ENCODE measurements at regions of chr1 and their contacts with region 1.

Region 1: GRCh38 chr1:87328272-87329050 is at the start of gene LMO4:
- DNase-seq: peak; percentile 93
- H3K4me3 Mint-ChIP-seq: peak within 1 kb of the TSS; percentile 89
- H3K27ac Mint-ChIP-seq: peak within 1 kb of the TSS; percentile 85
- H3K4me1 Mint-ChIP-seq: peaks cover 33% of the 10 kb centered on the region
- H3K27me3 Mint-ChIP-seq: peaks cover 8% of the 10 kb centered on the region
- total RNA-seq, gene LMO4: 23.0 to 24.1 TPM

Region 2: DNA sequence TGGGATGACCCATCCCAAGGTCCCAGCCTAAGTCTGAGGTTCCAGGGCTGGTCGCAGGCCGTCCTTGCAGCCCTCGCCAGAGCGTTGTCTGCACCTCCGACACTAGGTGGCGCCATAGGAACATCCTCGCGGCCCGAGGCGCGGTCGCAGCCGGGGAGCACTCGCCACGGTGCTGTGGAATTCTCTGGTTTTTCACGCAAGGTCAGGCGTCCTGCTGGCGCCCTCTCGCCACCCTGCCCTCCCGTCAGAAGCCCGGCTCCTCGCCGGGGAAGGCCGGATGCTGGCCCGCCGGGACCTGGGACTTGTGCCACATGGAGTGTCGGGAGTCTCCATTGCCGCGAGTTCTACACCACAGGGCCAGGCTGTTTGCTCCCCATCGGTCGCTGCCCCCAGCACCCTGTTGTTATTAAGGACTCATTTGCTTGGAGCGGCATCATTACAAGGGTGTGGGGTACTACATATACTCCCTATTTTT is 196.6 kb before region 1 on chr1:
- CTCF ChIA-PET with region 1: interaction called, 3 read pairs
- POLR2A ChIA-PET with region 1: no interaction called
- intact Hi-C with region 1: loop called (anchors 5 kb)
- DNase-seq: peak; percentile 79
- H3K4me3 Mint-ChIP-seq: peak overlapping the region; percentile 70
- H3K27ac Mint-ChIP-seq: no peak overlapping the region
- H3K4me1 Mint-ChIP-seq: peaks cover 10% of the 10 kb centered on the region
- H3K27me3 Mint-ChIP-seq: peaks cover 32% of the 10 kb centered on the region

Region 3: DNA sequence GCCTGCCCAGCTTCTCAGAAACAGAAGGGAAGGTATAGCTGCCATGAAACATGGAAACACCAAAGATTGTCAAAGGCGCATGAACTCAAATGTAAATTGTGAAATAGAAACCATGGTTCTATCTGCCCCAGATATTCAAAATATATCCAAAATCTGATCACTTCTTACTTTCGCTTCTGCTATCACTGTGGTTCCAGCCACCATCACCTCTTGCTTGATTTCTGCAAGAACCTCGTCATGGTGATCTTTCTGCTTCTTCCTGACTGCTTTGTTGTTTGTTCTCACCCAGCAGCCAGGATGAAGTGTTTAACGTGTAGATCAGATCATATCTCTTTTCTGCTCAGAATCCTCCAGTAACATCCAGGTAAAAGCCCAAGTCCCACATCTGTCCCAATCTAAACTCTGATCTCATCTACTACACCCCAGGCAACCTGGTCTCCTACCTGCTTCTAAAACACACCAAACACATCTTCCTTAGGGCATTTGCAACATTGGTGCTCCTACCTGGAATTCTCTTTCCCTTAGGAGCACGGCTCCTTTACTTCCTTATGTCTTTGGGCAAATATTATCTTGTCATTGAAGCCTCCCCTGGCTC is 10.3 kb before region 1 on chr1:
- CTCF ChIA-PET with region 1: interaction called, 15 read pairs
- POLR2A ChIA-PET with region 1: no interaction called
- intact Hi-C with region 1: no loop called
- DNase-seq: no peak
- H3K4me3 Mint-ChIP-seq: no peak overlapping the region
- H3K27ac Mint-ChIP-seq: no peak overlapping the region
- H3K4me1 Mint-ChIP-seq: peaks cover 7% of the 10 kb centered on the region
- H3K27me3 Mint-ChIP-seq: peaks cover 12% of the 10 kb centered on the region

Region 4: DNA sequence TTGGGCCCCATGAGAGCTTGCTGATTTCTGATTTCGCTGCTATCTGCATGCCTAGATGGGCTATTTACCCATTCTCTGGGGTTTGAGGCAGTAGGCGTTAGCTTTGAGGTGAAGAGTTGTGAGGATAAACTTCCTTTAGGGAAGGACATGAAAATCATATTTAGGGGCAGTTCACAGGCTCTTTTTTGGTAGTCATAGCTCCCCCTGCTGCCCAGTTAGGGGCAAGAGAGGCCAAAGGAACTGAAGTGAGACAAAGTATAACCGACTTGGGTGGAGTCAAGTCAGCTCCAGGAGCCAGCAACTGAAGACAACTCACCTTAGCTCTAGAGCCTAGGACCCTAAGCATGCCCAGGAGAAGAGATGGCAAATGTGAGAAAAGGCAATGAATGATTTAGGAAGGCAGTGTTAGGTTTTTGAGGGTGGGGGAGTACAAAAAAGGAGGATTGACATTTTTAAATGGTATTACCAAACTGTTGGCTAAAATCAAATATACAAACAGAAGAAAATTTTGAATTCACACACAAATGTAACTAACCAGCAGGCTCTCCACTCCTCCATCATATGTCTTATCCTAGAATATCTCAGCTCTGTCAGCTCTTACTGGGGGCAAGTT is 625.4 kb after region 1 on chr1:
- CTCF ChIA-PET with region 1: interaction called, 42 read pairs
- POLR2A ChIA-PET with region 1: no interaction called
- intact Hi-C with region 1: loop called (anchors 1 kb)
- DNase-seq: peak; percentile 62
- H3K4me3 Mint-ChIP-seq: no peak overlapping the region
- H3K27ac Mint-ChIP-seq: no peak overlapping the region
- H3K4me1 Mint-ChIP-seq: no peaks in the 10 kb centered on the region
- H3K27me3 Mint-ChIP-seq: peaks cover 19% of the 10 kb centered on the region

Measured in activated CD4-positive, alpha-beta memory T cell treated with anti-CD3 and anti-CD28 coated beads for 36 hours (primary cell).